ENCODE measurements at regions of chr5 and their contacts with region 1.

Region 1: DNA sequence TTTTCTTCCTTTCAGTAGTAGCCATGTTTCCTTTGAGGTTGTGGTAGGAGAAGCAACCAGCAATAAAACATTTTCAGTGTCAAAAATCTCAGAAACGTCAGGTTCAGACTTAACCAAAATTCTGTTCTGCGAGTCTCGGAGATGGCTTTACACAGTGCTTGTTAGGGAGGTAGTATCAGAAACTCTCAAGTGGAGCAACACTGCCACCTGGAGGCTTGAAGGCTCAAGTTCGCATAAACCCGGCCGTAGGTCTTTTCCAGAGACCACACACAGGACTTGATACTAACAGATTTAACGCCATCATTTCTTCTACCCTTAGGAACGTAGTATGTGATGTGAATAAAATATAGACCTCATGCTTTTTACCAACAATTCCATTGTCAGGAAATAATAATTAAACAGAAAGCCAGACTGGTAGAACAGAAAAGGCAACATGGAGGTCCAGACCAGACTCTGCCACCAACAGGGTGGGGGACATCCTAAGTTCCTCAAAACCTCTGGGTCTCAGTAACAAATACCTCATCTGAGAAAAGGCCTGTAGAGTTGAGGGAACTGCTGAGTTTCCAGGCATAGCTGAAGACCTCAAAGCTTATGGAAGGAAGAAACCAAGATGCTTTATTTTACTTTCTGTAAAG is 8.5 kb downstream of the PTGER4 start:
- DNase-seq: peak; percentile 84
- H3K4me3 ChIP-seq: no peak overlapping the region
- H3K27ac ChIP-seq: no peak overlapping the region
- H3K4me1 ChIP-seq: no peaks in the 10 kb centered on the region
- CTCF ChIP-seq: peak; percentile 94

Region 2: DNA sequence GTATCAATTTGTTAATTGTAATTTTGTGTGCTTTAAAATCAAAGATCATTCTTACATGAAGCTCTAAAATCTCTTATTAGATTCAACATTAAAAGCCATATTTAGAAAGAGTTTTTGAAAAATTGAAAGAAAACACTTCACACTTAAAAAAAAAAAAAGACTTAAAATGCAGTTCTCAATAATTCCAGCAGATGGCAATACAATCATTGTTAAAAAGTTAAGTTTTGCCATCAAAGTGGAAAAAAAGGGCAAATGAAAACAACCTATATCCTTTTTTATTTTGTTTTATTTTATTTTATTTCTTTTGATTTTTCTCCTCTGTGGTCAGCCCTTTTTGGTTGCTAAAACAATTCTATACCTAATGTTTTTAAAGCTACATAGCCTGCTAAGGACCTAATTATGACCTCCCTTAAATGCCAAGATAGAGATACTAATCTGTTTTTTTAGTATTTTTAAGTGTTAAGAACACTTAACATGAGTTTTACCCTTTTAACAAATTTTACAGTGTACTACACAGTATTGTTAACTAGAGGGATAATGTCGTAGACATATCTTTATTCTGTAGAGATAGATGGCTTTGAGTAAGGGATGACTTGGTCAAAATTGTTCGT is 1109.3 kb before region 1 on chr5:
- CTCF ChIA-PET with region 1: no interaction called
- POLR2A ChIA-PET with region 1: no interaction called
- intact Hi-C with region 1: loop called (anchors 5 kb)
- DNase-seq: peak; percentile 13
- H3K4me3 ChIP-seq: no peak overlapping the region
- H3K27ac ChIP-seq: no peak overlapping the region
- H3K4me1 ChIP-seq: no peaks in the 10 kb centered on the region
- CTCF ChIP-seq: peak; percentile 85

Region 3: DNA sequence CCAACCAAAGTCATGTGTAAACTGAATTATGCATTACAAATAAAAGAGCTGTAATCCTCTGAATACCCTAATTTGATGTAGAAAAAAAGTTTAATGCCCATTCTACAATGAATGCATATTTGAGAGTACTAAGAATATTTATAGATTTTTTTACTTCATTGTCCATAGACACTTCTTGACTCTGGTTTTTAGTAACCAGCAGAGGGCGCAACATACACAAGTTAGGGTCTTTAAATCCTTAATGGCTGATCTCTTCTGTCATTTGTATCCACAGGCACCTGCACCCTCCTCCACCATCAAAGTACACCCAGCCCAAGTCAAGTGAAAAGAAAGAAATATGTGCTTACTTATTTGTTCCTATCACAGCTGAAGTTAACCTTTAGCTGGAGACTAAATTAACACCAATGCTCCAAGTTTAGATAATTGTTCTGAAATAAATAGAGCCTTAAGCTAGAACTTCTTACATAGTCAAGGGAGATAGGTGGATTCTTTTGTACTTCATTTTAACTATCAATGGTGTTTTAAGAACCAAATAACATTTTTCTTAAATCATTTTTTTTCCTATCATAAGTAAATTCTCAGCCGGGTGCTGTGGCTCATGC is 739.3 kb before region 1 on chr5:
- CTCF ChIA-PET with region 1: no interaction called
- POLR2A ChIA-PET with region 1: no interaction called
- intact Hi-C with region 1: loop called (anchors 1 kb)
- DNase-seq: peak; percentile 79
- H3K4me3 ChIP-seq: no peak overlapping the region
- H3K27ac ChIP-seq: no peak overlapping the region
- H3K4me1 ChIP-seq: no peaks in the 10 kb centered on the region
- CTCF ChIP-seq: peak; percentile 89

Region 4: DNA sequence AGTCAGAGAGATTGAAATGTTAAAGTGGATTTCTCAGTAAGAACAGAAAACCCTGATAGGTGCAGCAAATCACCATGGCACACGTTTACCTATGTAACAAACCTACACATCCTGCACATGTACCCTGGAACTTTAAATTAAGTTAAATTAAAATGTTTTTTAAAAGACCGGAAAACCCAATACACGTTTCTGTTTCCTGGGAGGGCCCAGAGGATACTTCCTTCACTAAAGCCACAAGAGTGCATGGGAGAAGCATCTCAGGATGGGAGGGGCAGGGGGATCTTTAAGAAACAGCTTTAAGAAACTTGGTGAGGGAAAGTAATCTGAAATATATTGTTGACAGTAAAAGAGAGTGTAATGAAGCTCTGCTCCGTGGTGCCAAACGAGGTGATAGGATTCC is 173.3 kb before region 1 on chr5:
- CTCF ChIA-PET with region 1: no interaction called
- POLR2A ChIA-PET with region 1: no interaction called
- intact Hi-C with region 1: loop called (anchors 5 kb)
- DNase-seq: no peak
- H3K4me3 ChIP-seq: no peak overlapping the region
- H3K27ac ChIP-seq: no peak overlapping the region
- H3K4me1 ChIP-seq: no peaks in the 10 kb centered on the region
- CTCF ChIP-seq: no peak

Region 5: DNA sequence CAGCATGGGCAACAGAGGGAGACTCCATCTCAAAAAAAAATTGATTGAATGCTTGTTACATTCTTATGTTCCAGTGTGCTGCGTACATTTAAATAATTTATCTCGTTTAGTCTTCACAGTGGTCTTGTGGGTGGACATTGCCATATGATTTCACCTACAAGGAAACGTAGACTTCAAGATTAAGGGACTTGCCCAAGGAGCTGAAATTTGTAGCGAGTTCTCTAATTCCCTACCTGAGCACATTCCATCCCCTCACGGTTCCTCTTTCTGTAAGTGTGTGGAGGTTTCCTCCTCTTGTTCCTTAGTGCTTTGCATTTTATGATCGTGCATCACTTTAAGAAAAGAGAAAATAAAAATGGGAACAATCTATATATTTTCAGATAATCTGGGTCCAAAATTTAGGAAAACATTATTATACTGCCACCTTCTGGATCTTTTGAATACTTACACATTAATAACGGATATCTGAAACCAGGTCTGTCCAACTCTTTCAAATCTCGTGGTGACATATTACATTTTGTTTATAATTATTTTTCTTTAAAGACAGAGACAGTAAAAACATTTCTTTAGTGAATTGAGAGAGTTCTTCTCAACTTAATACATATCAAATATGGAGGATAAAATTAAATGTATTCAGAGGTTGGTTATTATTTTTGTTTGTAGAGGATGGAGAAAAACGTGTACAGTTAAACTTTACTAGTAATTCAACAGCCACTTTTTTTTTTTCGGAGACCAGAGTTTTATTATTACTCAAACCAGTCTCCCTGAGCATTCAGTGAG is 191.1 kb after region 1 on chr5:
- CTCF ChIA-PET with region 1: no interaction called
- POLR2A ChIA-PET with region 1: no interaction called
- intact Hi-C with region 1: loop called (anchors 5 kb)
- DNase-seq: peak; percentile 47
- H3K4me3 ChIP-seq: no peak overlapping the region
- H3K27ac ChIP-seq: no peak overlapping the region
- H3K4me1 ChIP-seq: no peaks in the 10 kb centered on the region
- CTCF ChIP-seq: peak; percentile 92

Region 6: DNA sequence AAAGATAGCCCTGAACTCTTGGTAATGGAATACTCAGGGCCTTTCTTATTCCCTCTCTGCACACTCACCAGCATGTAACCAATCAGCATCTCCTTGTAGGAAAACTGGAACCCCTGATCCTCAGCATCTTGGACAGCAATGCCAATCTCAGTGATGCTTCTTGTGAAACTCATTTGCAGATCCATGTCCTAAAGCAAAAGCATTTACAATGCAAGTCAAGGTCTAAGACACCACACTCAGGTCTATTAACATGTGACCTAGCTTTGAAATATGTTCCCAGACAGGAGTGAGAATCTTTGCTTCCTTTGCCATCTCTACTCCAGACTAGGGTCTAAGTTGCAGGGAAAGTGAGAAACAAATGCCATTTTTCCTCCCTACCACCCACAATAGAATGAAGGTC is 344.7 kb after region 1 on chr5:
- CTCF ChIA-PET with region 1: no interaction called
- POLR2A ChIA-PET with region 1: no interaction called
- intact Hi-C with region 1: no loop called
- DNase-seq: no peak
- H3K4me3 ChIP-seq: no peak overlapping the region
- H3K27ac ChIP-seq: no peak overlapping the region
- H3K4me1 ChIP-seq: no peaks in the 10 kb centered on the region
- CTCF ChIP-seq: no peak

Region 7: GRCh38 chr5:41048986-41049385 is 360.7 kb after region 1 on chr5:
- CTCF ChIA-PET with region 1: no interaction called
- POLR2A ChIA-PET with region 1: no interaction called
- intact Hi-C with region 1: no loop called
- DNase-seq: no peak
- H3K4me3 ChIP-seq: no peak overlapping the region
- H3K27ac ChIP-seq: no peak overlapping the region
- H3K4me1 ChIP-seq: no peaks in the 10 kb centered on the region
- CTCF ChIP-seq: no peak